Right cardiac atrium (tissue), 5 donors: ENCODE measurements at regions of chr19 and their contacts with region 1.

Region 1: GRCh38 chr19:55301459-55302317 is 17.9 kb downstream of the BRSK1 start:
- DNase-seq: peak; percentile 91 to 96 (median 96)
- ATAC-seq: peak; percentile 87 to 90
- H3K4me3 ChIP-seq: peak overlapping the region; percentile 17
- H3K27ac ChIP-seq: no peak overlapping the region
- H3K4me1 ChIP-seq: no peaks in the 10 kb centered on the region
- H3K27me3 ChIP-seq: no peaks in the 10 kb centered on the region

Region 2: DNA sequence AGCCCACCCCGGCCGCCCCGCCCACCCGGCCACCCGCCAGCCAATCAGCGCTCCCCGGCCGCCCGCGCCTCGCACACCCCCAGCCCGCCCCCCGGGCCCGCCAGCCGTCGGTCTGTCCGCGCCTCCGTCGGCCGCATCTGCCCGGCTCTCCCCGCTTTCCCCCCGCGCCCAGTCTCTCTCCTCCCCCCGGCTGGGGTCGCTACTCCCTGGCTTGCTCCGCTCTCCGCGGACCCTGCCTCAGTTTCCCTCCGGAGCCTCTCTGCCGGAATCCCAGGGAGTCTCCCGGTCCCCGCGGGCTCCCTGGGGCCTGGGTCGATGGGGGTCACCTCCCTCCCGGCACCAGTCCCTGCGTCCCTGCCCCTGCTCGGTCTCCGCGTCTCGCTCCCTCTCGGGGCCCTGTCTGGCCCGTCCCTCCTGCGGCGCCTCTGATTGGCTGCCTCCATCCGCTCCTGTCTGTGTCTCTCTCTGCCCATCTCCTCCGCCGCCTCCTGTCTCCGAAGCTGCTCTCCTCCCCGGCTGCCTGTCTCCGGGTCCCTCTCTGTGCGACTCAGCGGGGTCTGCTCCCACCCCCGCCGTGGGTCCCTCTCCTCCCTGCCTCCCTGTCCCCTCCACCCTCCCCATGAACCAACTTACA is 68.1 kb after region 1 on chr19:
- intact Hi-C with region 1: loop called in 1 of 4 experiments (anchors 10 kb)
- DNase-seq: no peak
- ATAC-seq: peak in 1 of 2 donors; percentile 36
- H3K4me3 ChIP-seq: peak overlapping the region; percentile 51
- H3K27ac ChIP-seq: no peak overlapping the region
- H3K4me1 ChIP-seq: no peaks in the 10 kb centered on the region
- H3K27me3 ChIP-seq: no peaks in the 10 kb centered on the region

Region 3: GRCh38 chr19:55385740-55386529 is 84.2 kb after region 1 on chr19 and contains the start of gene RPL28:
- intact Hi-C with region 1: loop called in 2 of 4 experiments (anchors 5 kb)
- DNase-seq: peak; percentile 98 to 99 (median 99)
- ATAC-seq: peak; percentile 92 to 93
- H3K4me3 ChIP-seq: peak within 1 kb of the TSS; percentile 94
- H3K27ac ChIP-seq: peak within 1 kb of the TSS; percentile 99
- H3K4me1 ChIP-seq: peaks cover 12% of the 10 kb centered on the region
- H3K27me3 ChIP-seq: no peaks in the 10 kb centered on the region
- total RNA-seq, gene RPL28: 656 to 1,015 (median 735) TPM